Thyroid gland (tissue), 4 donors: ENCODE measurements at regions of chr5 and their contacts with region 1.

Region 1: DNA sequence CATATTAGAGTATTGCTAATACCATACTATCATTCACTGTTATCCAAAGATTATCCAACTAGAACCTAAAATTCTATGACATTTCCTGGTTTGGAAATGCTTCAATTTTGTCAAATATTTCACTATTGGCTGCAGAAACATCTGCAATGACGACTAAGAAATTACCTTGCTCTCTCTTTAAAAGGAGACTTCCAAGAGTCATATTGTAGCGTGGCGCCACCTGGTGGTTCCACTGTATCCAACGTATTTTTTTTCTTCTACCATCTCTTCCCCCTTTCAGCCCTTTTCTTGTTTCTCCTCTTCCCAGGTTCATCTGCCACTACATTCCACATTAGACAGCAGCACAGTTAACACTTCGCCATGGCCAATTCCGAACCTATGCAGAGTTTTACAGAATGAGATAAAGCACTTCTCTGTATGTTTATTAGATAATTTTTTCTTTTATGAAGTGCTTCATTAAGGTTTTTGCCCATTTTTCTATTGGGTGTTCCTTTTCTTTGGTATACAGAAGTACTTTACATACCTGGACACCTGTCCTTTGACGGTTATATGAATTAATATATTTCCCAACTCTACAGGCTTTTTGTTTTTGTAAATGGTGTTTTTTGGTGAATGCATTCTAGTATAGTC is 153.5 kb downstream of the CDC42SE2 start:
- DNase-seq: peak; percentile 85 to 92
- H3K4me3 ChIP-seq: no peak overlapping the region
- H3K27ac ChIP-seq: no peak overlapping the region
- H3K4me1 ChIP-seq: peaks cover 3 to 18% of the 10 kb centered on the region in 2 donors
- H3K27me3 ChIP-seq: no peaks in the 10 kb centered on the region
- CTCF ChIP-seq: peak; percentile 76 to 89 (median 84)
- POLR2A ChIP-seq: no peak

Region 2: GRCh38 chr5:131170540-131171275 is 246.6 kb before region 1 on chr5 and contains the start of gene LYRM7:
- intact Hi-C with region 1: loop called (anchors 10 kb)
- DNase-seq: peak; percentile 98 to 99
- H3K4me3 ChIP-seq: peak within 1 kb of the TSS; percentile 14 to 48 (median 37)
- H3K27ac ChIP-seq: peak within 1 kb of the TSS; percentile 4 to 62 (median 40)
- H3K4me1 ChIP-seq: peaks cover 14 to 16% of the 10 kb centered on the region in 2 donors
- H3K27me3 ChIP-seq: no peaks in the 10 kb centered on the region
- CTCF ChIP-seq: peak in 2 of 6 experiments; percentile 8
- POLR2A ChIP-seq: peak in 1 of 2 donors; percentile 90
- total RNA-seq, gene LYRM7: 8.8 to 13.2 (median 9.5) TPM

Region 3: DNA sequence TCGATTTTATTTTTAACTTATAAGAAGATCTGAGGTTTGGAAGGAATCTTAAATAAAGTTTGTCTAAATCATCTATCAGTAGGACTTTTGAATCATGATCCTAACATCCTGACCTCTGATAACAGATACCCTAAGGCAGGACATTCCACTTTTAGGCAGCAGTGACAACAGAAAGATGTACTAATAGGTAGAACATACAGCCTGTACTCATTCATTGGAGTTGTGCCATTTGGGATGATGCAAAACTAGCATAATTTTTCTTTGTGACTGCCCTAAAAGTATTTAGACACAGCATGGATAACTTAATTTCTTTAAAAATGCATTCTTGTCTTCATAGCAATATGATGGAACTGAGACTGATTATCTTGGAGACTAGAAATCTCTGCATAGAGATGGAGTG is 113.8 kb before region 1 on chr5:
- intact Hi-C with region 1: no loop called
- DNase-seq: no peak
- H3K4me3 ChIP-seq: no peak overlapping the region
- H3K27ac ChIP-seq: no peak overlapping the region
- H3K4me1 ChIP-seq: no peaks in the 10 kb centered on the region
- H3K27me3 ChIP-seq: no peaks in the 10 kb centered on the region
- CTCF ChIP-seq: no peak
- POLR2A ChIP-seq: no peak